ENCODE measurements at regions of chr9 and their contacts with region 1.

Region 1: GRCh38 chr9:7055201-7055903 is 297.6 kb downstream of the KDM4C start:
- DNase-seq: no peak
- ATAC-seq: no peak

Region 2: GRCh38 chr9:7130266-7130820 is 75.0 kb after region 1 on chr9:
- intact Hi-C with region 1: loop called (anchors 5 kb)
- DNase-seq: no peak
- ATAC-seq: no peak

Region 3: GRCh38 chr9:7536310-7536939 is 481.1 kb after region 1 on chr9:
- intact Hi-C with region 1: loop called (anchors 5 kb)
- DNase-seq: peak; percentile 41
- ATAC-seq: peak; percentile 75